IMR-90 (cell line): ENCODE measurements at regions of chr4 and their contacts with region 1.

Region 1: GRCh38 chr4:80365928-80366327 is 30.4 kb downstream of the CFAP299 start:
- DNase-seq: peak; percentile 76
- ATAC-seq: peak; percentile 94
- H3K4me3 ChIP-seq: no peak overlapping the region
- H3K27ac ChIP-seq: no peak overlapping the region
- H3K4me1 ChIP-seq: 0 out of 2 replicates have a peak, but pooled peaks cover under 1% of the 10 kb centered on the region
- H3K27me3 ChIP-seq: no peaks in the 10 kb centered on the region
- CTCF ChIP-seq: peak; percentile 91
- POLR2A ChIP-seq: no peak
- RAD21 ChIP-seq: peak; percentile 92

Region 2: GRCh38 chr4:80340036-80340435 is 25.9 kb before region 1 on chr4:
- CTCF ChIA-PET with region 1: no interaction called
- POLR2A ChIA-PET with region 1: no interaction called
- dilution Hi-C with region 1: no loop called
- in situ Hi-C with region 1: no loop called
- intact Hi-C with region 1: no loop called
- DNase-seq: peak; percentile 22
- ATAC-seq: no peak
- H3K4me3 ChIP-seq: no peak overlapping the region
- H3K27ac ChIP-seq: no peak overlapping the region
- H3K4me1 ChIP-seq: peaks cover 2% of the 10 kb centered on the region; the same call in 1 of the 2 replicates
- H3K27me3 ChIP-seq: no peaks in the 10 kb centered on the region
- CTCF ChIP-seq: no peak
- POLR2A ChIP-seq: no peak
- RAD21 ChIP-seq: no peak

Region 3: GRCh38 chr4:80610845-80611677 is 245.1 kb after region 1 on chr4:
- CTCF ChIA-PET with region 1: no interaction called
- POLR2A ChIA-PET with region 1: no interaction called
- dilution Hi-C with region 1: no loop called
- in situ Hi-C with region 1: no loop called
- intact Hi-C with region 1: loop called (anchors 10 kb)
- DNase-seq: peak; percentile 67
- ATAC-seq: no peak
- H3K4me3 ChIP-seq: no peak overlapping the region
- H3K27ac ChIP-seq: no peak overlapping the region
- H3K4me1 ChIP-seq: no peaks in the 10 kb centered on the region; the same call in 1 of the 2 replicates
- H3K27me3 ChIP-seq: peaks cover 1% of the 10 kb centered on the region; the same call in 1 of the 2 replicates
- CTCF ChIP-seq: no peak
- POLR2A ChIP-seq: no peak
- RAD21 ChIP-seq: no peak

Region 4: GRCh38 chr4:80897537-80898303 is 531.8 kb after region 1 on chr4:
- CTCF ChIA-PET with region 1: no interaction called
- POLR2A ChIA-PET with region 1: no interaction called
- dilution Hi-C with region 1: no loop called
- in situ Hi-C with region 1: no loop called
- intact Hi-C with region 1: no loop called
- DNase-seq: no peak
- ATAC-seq: no peak
- H3K4me3 ChIP-seq: no peak overlapping the region
- H3K27ac ChIP-seq: no peak overlapping the region
- H3K4me1 ChIP-seq: no peaks in the 10 kb centered on the region
- H3K27me3 ChIP-seq: no peaks in the 10 kb centered on the region
- CTCF ChIP-seq: no peak
- POLR2A ChIP-seq: no peak
- RAD21 ChIP-seq: no peak

Region 5: GRCh38 chr4:81040012-81040659 is 674.2 kb after region 1 on chr4:
- CTCF ChIA-PET with region 1: interaction called, 17 read pairs
- POLR2A ChIA-PET with region 1: no interaction called
- dilution Hi-C with region 1: no loop called
- in situ Hi-C with region 1: loop called (anchors 5 kb)
- intact Hi-C with region 1: loop called (anchors 1 kb)
- DNase-seq: peak; percentile 35
- ATAC-seq: peak; percentile 71
- H3K4me3 ChIP-seq: no peak overlapping the region
- H3K27ac ChIP-seq: no peak overlapping the region
- H3K4me1 ChIP-seq: peaks cover 2% of the 10 kb centered on the region; the same call in 1 of the 2 replicates
- H3K27me3 ChIP-seq: peaks cover 1% of the 10 kb centered on the region; the same call in 1 of the 2 replicates
- CTCF ChIP-seq: peak; percentile 81
- POLR2A ChIP-seq: no peak
- RAD21 ChIP-seq: peak; percentile 79

Region 6: DNA sequence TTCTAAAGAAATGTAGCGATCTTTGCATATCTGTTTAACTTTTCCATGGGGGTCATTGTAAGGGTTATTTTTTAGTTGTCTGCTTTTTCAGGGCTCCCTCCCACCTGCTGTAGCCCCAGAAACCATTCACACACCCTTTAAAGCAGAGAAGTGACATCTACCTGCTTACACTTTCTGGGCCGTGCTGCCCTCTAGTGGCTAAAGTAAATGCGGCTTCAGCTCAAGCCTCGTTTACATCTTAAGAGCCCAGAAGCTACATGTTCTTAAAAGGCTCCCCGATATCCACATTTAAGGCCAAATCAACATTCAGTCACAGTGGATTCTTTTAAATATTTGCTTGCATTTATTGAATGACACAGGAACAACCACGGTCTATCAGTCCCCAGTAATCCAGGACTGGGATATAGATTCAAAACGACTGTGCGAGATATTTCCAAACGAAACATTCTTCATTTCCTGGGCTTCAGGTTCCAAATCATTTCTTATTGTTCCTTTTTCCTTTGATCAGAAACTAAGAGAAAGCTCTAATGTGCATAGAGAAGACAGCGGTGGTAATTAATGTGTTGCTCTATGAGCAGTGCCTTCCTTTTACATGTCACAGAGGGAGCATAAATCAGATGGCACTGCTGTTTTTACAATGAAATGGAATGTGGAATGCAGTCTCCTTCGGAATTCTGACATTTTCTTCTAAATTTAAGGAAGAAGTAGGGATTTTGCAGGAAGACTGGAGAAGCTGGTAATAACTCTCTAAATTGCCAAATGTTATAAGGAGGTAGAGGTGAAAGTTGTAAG is 985.9 kb after region 1 on chr4:
- CTCF ChIA-PET with region 1: no interaction called
- POLR2A ChIA-PET with region 1: no interaction called
- dilution Hi-C with region 1: no loop called
- in situ Hi-C with region 1: loop called (anchors 10 kb)
- intact Hi-C with region 1: no loop called
- DNase-seq: peak; percentile 78
- ATAC-seq: peak; percentile 79
- H3K4me3 ChIP-seq: no peak overlapping the region
- H3K27ac ChIP-seq: no peak overlapping the region
- H3K4me1 ChIP-seq: peaks cover 4% of the 10 kb centered on the region
- H3K27me3 ChIP-seq: no peaks in the 10 kb centered on the region
- CTCF ChIP-seq: peak; percentile 91
- POLR2A ChIP-seq: no peak
- RAD21 ChIP-seq: peak; percentile 81

Region 7: GRCh38 chr4:82201805-82202641 is 1836.1 kb after region 1 on chr4:
- CTCF ChIA-PET with region 1: no interaction called
- POLR2A ChIA-PET with region 1: no interaction called
- dilution Hi-C with region 1: no loop called
- in situ Hi-C with region 1: no loop called
- intact Hi-C with region 1: loop called (anchors 5 kb)
- DNase-seq: peak; percentile 27
- ATAC-seq: peak; percentile 46; the same call in 1 of the 2 replicates
- H3K4me3 ChIP-seq: no peak overlapping the region
- H3K27ac ChIP-seq: no peak overlapping the region
- H3K4me1 ChIP-seq: no peaks in the 10 kb centered on the region
- H3K27me3 ChIP-seq: no peaks in the 10 kb centered on the region
- CTCF ChIP-seq: peak; percentile 61
- POLR2A ChIP-seq: no peak
- RAD21 ChIP-seq: peak; percentile 80